GM10248 (cell line): ENCODE measurements at regions of chr9 and their contacts with region 1.

Region 1: DNA sequence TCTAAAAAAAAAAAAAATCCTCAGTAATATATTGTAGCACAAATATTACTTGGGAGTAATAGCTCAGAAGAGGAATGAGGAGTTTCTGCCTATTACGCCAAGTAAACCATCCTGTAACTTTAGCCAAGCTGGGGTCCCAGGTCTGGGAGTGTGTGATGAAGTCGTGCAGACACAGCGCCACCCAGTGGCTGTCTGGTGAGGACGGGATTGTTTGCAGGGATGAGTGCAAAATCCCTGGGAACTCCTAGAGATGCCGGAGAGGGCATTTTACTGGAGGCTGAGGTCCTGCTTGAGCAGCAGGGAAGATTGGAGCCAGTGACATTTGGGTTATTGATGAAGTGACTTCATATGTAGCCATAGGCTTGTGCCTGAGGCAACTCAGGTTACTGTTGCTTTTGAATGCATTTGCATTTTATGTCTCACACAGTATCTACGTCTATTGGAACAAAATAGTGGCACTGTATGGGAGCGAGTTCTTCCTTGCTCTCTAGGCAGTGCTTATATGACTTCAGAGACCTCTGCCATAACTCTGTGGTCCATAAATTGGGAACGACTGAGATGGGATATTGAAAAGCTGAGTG is 72.8 kb downstream of the PSAT1 start:
- DNase-seq: peak; percentile 53
- CTCF ChIP-seq: peak; percentile 81

Region 2: GRCh38 chr9:78187763-78188484 is 181.8 kb before region 1 on chr9:
- CTCF ChIA-PET with region 1: no interaction called
- POLR2A ChIA-PET with region 1: no interaction called
- DNase-seq: no peak
- CTCF ChIP-seq: no peak

Region 3: GRCh38 chr9:78262655-78263054 is 107.1 kb before region 1 on chr9:
- CTCF ChIA-PET with region 1: interaction called, 13 read pairs
- POLR2A ChIA-PET with region 1: no interaction called
- DNase-seq: no peak
- CTCF ChIP-seq: no peak

Region 4: DNA sequence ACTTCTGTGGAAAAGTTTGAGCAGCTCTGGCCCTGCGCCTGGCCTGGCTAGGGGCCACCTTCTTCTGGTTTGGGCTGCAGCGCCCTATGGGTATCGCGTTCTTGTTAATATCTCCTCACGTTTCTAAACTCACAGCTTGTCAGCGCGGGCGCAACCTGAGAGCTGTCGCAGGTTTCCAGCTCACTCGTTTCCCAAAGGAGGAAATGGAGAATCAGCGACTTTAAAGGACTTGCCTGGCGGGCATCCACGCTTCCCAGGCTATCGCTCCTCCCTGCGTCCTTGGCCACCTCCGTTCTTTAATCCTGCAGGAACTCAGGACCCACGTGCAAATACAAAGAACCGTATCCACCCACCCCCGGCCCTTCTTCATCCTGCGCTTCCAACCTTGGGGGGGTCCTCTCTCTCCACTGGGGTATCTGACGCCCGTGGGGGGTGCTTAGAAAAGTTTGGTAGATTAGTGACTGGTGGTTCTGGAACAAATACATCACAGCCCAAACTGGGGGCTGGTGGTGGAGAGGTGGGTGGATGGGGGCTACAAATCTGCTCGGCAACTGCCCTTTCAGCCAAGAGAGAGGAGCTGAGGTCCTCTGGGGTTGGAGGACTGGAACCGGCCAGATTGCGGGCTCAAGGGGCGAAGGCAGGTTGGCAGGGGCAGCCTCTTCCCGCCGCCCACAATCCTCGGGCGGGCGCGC is 73.4 kb before region 1 on chr9:
- CTCF ChIA-PET with region 1: no interaction called
- POLR2A ChIA-PET with region 1: no interaction called
- DNase-seq: no peak
- CTCF ChIP-seq: no peak

Region 5: GRCh38 chr9:78357165-78357873 is 12.4 kb before region 1 on chr9:
- CTCF ChIA-PET with region 1: interaction called, 29 read pairs
- POLR2A ChIA-PET with region 1: no interaction called
- DNase-seq: no peak
- CTCF ChIP-seq: no peak

Region 6: DNA sequence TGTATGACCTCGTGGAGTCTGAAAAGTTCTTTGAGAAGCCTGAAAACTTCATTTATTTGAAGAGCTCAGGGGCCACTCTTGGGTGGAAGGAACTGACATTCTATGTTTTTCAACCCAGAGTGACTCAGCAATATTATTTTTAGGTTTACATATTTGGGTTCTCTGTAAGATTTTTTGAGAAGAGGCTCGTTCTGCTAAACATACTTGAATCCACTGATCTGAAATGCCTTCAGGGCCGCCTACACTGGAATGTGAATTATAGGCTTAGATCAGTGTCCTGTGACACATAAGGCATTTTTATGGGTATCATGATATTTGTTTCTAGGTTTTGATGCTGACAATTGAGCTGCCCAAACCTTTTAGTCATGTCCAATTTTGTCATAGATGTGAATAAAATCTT is 13.4 kb after region 1 on chr9:
- CTCF ChIA-PET with region 1: interaction called, 19 read pairs
- POLR2A ChIA-PET with region 1: no interaction called
- DNase-seq: no peak
- CTCF ChIP-seq: no peak

Region 7: GRCh38 chr9:78397045-78397444 is 27.3 kb after region 1 on chr9:
- CTCF ChIA-PET with region 1: no interaction called
- POLR2A ChIA-PET with region 1: no interaction called
- DNase-seq: no peak
- CTCF ChIP-seq: no peak

Region 8: GRCh38 chr9:78590068-78590467 is 220.3 kb after region 1 on chr9:
- CTCF ChIA-PET with region 1: no interaction called
- POLR2A ChIA-PET with region 1: no interaction called
- DNase-seq: no peak
- CTCF ChIP-seq: no peak